ENCODE measurements at regions of chr20 and their contacts with region 1.

Region 1: DNA sequence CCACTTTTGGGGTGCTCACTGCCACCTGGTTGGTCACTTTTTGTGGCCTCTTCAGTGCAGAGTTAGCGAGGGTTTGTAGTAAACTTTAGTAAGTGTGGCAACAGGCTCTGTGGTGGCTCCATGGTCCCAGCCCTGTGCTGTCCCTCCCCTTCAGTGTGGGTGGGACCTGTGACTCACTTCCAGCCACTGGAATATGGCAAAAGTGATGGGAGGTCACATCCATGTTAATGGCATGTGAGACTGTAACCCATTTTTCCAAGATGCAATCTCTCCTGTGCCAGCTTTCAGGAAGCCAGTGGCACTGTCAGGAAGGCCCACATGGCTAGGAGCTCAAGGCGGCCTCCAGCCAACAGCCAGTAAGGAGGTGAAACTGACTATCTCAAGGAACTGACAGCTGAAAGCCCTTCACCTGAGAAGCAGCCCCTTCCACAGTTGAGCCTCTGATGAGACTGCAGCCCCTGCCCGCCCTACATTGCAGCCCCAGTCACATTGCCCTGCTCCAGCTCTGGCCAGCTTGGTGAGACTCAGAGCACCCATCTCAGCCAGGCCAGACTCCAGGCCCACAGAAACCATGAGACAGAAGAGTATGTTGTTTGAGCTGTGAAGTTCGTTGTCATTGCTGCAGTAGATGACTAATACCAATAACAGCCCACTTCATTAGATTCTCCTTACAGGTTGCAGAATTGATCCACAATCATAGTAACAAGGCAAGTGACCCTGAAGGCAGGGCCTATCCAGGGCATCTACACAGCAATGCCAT is 13.1 kb upstream of the CST7 start:
- DNase-seq: peak in 1 of 7 donors; percentile 18
- H3K4me3 ChIP-seq: no peak overlapping the region
- H3K27ac ChIP-seq: no peak overlapping the region
- H3K4me1 ChIP-seq: no peaks in the 10 kb centered on the region
- H3K27me3 ChIP-seq: no peaks in the 10 kb centered on the region
- CTCF ChIP-seq: no peak
- POLR2A ChIP-seq: no peak

Region 2: DNA sequence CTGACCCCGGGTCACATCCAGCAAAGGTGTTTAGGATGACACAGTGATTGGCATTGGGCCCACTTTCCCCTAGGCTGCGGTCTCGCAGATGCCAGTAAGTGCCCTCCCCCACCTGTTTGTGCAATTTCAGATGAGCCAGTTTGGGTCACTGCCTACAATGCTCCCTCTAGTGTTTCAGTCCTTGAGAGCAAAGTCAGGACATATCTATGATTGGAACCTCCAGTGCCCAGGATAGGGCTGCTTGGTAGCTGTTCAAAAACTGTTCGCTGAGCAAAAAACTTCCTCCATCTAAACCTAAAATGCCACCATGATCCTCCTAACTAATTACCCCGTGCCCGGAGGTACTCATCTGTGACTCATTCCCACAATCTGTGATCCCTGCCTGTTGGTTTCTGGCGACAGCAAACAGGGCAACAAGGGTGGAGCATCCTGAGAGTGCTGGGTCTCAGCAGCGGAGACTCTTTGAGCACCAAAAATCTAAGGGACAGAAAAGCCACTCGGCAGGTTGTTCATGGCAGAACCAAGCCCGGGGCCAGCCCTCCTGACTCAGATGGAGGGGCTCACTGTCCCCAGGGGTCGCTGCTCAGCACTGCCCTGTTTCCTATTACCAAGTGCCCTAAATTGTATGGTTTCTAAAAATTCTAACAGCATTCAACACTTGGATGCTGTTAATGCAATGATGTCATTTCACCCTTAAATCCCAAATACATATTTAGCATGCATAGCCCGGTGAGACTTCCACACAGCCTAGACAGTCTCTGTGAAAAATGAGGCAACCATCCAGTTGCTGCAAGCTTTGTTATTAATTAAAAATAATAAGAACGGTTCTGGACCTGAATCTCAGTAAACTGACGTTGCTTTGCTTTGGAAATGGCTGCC is 141.0 kb after region 1 on chr20:
- intact Hi-C with region 1: loop called in 1 of 2 experiments (anchors 5 kb)
- DNase-seq: peak in 5 of 7 donors; percentile 64 to 73 (median 67)
- H3K4me3 ChIP-seq: peak overlapping the region in 1 of 4 donors; percentile 35
- H3K27ac ChIP-seq: peak overlapping the region in 1 of 5 donors; percentile 52
- H3K4me1 ChIP-seq: peaks cover 0 to 11% of the 10 kb centered on the region in 2 donors
- H3K27me3 ChIP-seq: peaks cover 34% of the 10 kb centered on the region
- CTCF ChIP-seq: peak in 4 of 6 experiments; percentile 29 to 34 (median 31)
- POLR2A ChIP-seq: no peak